Activated CD4-positive, alpha-beta T cell treated with anti-CD3 and anti-CD28 coated beads, Interleukin-2, amount 10 ng/mL, durations not matched to agents 7 days and 5 days (primary cell): ENCODE measurements at regions of chr9 and their contacts with region 1.

Region 1: GRCh38 chr9:127734747-127735529 is at the start of gene TOR2A:
- DNase-seq: peak; percentile 99
- H3K4me3 Mint-ChIP-seq: peak within 1 kb of the TSS; percentile 82
- H3K27ac Mint-ChIP-seq: peak within 1 kb of the TSS; percentile 94
- H3K4me1 Mint-ChIP-seq: peaks cover 27% of the 10 kb centered on the region
- H3K27me3 Mint-ChIP-seq: no peaks in the 10 kb centered on the region
- total RNA-seq, gene TOR2A: 21.7 to 24.0 TPM

Region 2: GRCh38 chr9:127568971-127569885 is 165.7 kb before region 1 on chr9:
- CTCF ChIA-PET with region 1: interaction called, 10 read pairs
- POLR2A ChIA-PET with region 1: no interaction called
- DNase-seq: peak; percentile 82
- H3K4me3 Mint-ChIP-seq: peak overlapping the region; percentile 83
- H3K27ac Mint-ChIP-seq: peak overlapping the region; percentile 91
- H3K4me1 Mint-ChIP-seq: peaks cover 47% of the 10 kb centered on the region
- H3K27me3 Mint-ChIP-seq: no peaks in the 10 kb centered on the region

Region 3: GRCh38 chr9:127707726-127708147 is 27.2 kb before region 1 on chr9:
- CTCF ChIA-PET with region 1: interaction called, 17 read pairs
- POLR2A ChIA-PET with region 1: no interaction called
- DNase-seq: peak; percentile 31
- H3K4me3 Mint-ChIP-seq: no peak overlapping the region
- H3K27ac Mint-ChIP-seq: no peak overlapping the region
- H3K4me1 Mint-ChIP-seq: peaks cover 26% of the 10 kb centered on the region
- H3K27me3 Mint-ChIP-seq: no peaks in the 10 kb centered on the region

Region 4: DNA sequence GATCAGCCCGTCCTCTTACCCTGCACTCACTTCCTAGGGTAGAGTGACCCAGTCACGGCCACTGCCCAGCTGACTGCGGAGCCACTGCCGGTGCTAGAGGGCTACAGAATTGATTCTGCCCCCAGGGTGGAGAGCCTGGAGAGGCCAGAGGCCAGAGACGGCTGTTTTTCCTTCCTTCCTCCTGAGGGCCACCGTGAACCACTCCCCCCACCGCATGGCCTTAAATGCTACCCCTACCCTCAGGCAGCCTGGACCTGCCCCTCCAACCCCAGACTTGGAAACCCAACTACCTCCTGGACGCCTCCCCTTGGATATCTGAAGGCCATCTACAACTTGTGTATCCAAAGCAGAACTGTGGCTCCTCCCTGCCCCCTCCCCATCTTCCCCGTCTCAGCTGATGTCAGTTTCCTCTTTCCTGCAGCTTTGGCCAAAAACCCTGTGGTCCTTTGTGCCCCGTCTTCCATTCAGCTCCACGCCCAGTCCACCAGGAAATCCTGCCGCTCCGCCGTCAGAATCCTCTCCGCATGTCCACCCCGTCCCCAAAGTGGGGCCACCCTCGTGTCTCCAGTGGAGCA is 27.3 kb after region 1 on chr9:
- CTCF ChIA-PET with region 1: interaction called, 13 read pairs
- POLR2A ChIA-PET with region 1: no interaction called
- DNase-seq: no peak
- H3K4me3 Mint-ChIP-seq: peak overlapping the region; percentile 13
- H3K27ac Mint-ChIP-seq: no peak overlapping the region
- H3K4me1 Mint-ChIP-seq: peaks cover 42% of the 10 kb centered on the region
- H3K27me3 Mint-ChIP-seq: no peaks in the 10 kb centered on the region

Region 5: GRCh38 chr9:127785023-127785932 is 50.3 kb after region 1 on chr9:
- CTCF ChIA-PET with region 1: interaction called, 31 read pairs
- POLR2A ChIA-PET with region 1: interaction called, 3 read pairs
- DNase-seq: peak; percentile 90
- H3K4me3 Mint-ChIP-seq: peak overlapping the region; percentile 96
- H3K27ac Mint-ChIP-seq: peak overlapping the region; percentile 96
- H3K4me1 Mint-ChIP-seq: peaks cover 72% of the 10 kb centered on the region
- H3K27me3 Mint-ChIP-seq: no peaks in the 10 kb centered on the region

Region 6: GRCh38 chr9:127877566-127877998 is 142.6 kb after region 1 on chr9 and contains the start of gene AK1:
- CTCF ChIA-PET with region 1: interaction called, 11 read pairs
- POLR2A ChIA-PET with region 1: no interaction called
- DNase-seq: no peak
- H3K4me3 Mint-ChIP-seq: no peak within 1 kb of the TSS
- H3K27ac Mint-ChIP-seq: no peak within 1 kb of the TSS
- H3K4me1 Mint-ChIP-seq: peaks cover 3% of the 10 kb centered on the region
- H3K27me3 Mint-ChIP-seq: peaks cover 4% of the 10 kb centered on the region
- total RNA-seq, gene AK1: 53.7 to 62.3 TPM

Region 7: GRCh38 chr9:128066495-128067153 is 331.7 kb after region 1 on chr9:
- CTCF ChIA-PET with region 1: no interaction called
- POLR2A ChIA-PET with region 1: no interaction called
- DNase-seq: no peak
- H3K4me3 Mint-ChIP-seq: no peak overlapping the region
- H3K27ac Mint-ChIP-seq: peak overlapping the region; percentile 78
- H3K4me1 Mint-ChIP-seq: peaks cover 61% of the 10 kb centered on the region
- H3K27me3 Mint-ChIP-seq: no peaks in the 10 kb centered on the region